ENCODE measurements at regions of chr20 and their contacts with region 1.

Region 1: DNA sequence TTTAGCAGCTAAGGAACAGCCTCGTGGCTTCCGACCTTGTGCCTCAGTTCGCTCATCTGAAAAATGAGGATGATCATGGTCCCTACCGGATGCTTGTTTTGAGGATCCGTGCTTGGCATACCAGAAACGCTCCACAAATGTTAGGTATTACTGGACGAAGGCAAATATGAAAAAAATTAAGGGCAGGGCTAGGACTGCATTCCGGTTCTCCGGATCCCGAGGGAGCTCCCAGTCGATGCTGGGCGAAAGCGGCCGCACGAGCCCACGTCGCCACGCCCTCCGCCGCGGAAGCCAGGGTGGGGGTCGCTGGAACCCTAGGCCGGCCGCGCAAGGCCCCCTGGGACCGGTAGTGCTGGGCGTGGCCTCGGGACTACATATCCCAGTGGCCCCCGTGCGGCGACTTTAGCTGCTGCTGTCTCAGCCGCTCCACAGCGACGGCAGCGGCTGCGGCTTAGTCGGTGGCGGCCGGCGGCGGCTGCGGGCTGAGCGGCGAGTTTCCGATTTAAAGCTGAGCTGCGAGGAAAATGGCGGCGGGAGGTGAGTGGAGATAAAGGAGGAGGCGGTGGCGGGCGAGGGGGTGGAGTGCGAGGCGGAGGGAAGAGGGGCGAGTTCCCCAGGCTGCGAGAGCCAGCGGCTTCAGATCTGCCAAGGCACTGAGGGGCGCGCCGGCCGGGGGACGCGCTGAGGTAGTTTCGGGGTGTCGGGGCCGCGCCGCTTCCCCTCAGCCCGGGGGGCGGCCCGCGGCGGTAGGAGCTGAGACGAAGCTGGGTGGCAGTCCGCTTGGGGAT is at the start of gene NCOA3:
- DNase-seq: peak; percentile 64
- H3K4me3 ChIP-seq: peak within 1 kb of the TSS; percentile 75 to 99 (median 85)
- H3K27ac ChIP-seq: peak within 1 kb of the TSS; percentile 92 to 99 (median 96)
- H3K4me1 ChIP-seq: peaks cover 10 to 58% (median 14%) of the 10 kb centered on the region in 3 donors
- H3K27me3 ChIP-seq: no peaks in the 10 kb centered on the region
- CTCF ChIP-seq: peak; percentile 33 to 85 (median 68)
- POLR2A ChIP-seq: peak in 3 of 4 donors; percentile 10 to 99 (median 94)
- total RNA-seq, gene NCOA3: 26.7 to 40.2 (median 34.5) TPM

Region 2: DNA sequence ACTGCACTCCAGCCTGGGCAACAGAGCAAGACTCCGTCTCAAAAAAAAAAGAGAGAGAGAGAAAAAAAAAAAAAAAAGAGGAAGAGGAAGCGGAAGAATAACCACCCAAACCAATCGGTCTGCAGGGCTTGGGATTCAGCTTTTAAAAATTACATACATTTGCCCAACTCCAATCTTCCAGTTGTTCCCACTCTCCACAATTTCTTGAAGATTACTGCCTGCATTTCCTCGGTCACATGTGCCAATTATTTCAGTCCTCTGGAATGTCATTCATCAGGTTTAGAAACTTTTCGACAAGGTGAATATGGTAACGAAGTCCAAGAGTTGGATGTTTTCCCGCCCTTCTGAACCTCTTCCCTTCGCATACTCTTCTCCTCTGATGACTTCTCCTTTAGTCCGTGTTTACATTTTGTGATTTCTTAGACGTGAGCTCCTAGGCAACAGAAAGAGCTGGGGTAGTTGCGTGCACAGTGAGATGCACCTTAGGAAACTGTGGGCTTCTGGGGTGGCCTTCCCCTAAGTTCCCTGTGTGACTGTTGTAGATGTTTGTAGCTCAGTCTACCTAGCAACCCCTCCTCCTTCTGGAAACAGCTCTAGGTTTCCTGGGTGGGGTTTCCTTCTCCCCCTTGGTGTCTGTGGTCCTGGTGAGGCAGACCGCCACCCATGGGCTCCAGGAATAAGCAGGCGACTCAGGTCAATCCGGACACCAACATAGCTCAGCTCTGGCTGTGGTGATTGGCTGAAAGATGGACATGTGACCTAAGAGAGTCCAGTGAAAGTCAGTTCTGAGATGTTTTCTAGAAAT is 62.9 kb before region 1 on chr20:
- intact Hi-C with region 1: no loop called
- DNase-seq: no peak
- H3K4me3 ChIP-seq: no peak overlapping the region
- H3K27ac ChIP-seq: peak overlapping the region; percentile 15 to 55 (median 32)
- H3K4me1 ChIP-seq: peaks cover 3 to 23% (median 11%) of the 10 kb centered on the region in 3 donors
- H3K27me3 ChIP-seq: no peaks in the 10 kb centered on the region
- CTCF ChIP-seq: no peak
- POLR2A ChIP-seq: no peak

Region 3: DNA sequence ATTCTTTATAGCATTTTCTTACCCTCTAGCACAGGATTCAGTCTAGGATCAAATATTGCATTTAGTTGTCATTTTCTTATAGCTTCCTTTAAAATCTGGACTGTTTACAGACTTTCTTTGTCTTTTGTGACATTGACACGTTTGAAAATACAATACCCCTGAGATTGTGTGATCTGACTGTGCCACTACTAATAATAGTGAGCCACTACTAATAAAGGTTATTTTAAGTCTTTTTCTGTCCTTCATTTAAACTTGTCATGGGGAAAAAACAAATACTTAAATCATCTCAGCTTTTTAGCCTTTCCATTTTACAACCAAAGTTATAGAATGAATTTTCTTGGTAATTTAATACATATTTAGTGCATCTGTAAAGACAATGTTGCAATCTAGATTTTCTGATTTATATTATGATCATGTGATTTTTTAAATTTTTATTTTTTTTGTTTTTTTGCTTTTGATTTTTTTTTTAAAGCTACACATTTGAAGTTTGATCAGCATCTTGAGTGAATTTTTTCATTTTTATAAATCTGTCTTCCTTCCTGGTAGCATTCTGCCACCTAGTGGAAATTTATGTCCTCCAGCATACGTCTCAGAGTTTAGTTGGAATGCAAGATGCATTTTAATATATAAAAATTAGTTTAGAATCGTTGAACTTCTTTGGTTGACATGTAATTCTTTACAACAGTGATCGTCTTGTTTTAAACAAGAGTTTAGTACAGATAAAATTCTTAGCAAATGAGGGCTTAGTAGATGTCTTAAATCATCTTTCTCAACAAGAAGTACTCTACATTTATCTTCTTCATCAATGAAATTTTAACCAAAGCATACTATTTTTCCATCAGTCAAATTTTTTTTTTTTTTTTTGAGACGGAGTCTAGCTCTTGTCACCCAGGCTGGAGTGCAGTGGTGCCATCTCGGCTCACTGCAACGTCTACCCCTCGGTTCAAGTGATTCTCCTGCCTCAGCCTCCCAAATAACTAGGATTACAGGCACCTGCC is 119.4 kb after region 1 on chr20:
- intact Hi-C with region 1: loop called (anchors 10 kb)
- DNase-seq: no peak
- H3K4me3 ChIP-seq: no peak overlapping the region
- H3K27ac ChIP-seq: peak overlapping the region in 1 of 4 donors; percentile 4
- H3K4me1 ChIP-seq: peaks cover 0 to 4% (median 0%) of the 10 kb centered on the region in 3 donors
- H3K27me3 ChIP-seq: no peaks in the 10 kb centered on the region
- CTCF ChIP-seq: peak; percentile 48 to 93 (median 88)
- POLR2A ChIP-seq: no peak